ENCODE measurements at regions of chr11 and their contacts with region 1.

Region 1: GRCh38 chr11:5004424-5005274 is 10.0 kb downstream of the OR51L1 start:
- DNase-seq: peak; percentile 41
- H3K4me3 ChIP-seq: no peak overlapping the region
- H3K27ac ChIP-seq: no peak overlapping the region
- H3K4me1 ChIP-seq: no peaks in the 10 kb centered on the region
- H3K27me3 ChIP-seq: no peaks in the 10 kb centered on the region
- CTCF ChIP-seq: peak; percentile 73

Region 2: DNA sequence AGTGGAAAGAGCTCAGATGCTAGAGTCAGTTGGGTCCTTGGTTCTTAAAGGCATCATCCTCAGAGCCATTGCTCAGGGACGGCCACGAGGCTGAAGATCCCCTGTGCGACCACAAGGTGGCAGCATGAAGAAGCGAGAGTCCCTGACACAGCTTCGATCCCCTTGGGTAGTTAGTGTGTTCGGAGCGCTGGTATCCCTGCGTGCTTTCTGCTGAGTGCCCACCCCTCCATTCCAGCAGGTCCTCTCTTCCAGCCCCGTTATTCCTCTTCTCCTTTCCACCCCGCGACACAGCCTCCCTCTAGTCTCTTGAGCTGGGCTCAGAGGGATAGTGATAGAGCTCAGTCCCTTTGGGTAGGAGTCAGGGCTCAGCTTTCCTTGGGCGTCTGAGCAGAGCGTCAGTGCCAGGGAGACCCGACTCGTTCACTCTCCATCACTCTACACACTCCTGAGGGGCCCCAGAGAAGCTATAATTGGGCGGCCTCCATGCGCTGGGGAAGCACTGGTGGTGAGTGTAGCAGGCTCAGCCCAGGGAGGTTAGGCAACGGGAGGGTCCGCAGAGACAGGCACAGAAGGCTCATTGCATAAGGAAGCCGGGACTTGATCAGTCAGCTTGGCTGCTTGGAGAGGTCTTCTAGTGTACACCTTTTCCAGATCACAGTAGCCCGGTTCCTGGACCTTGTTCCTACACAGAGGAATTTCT is 367.5 kb before region 1 on chr11 and contains the start of gene OR51D1:
- intact Hi-C with region 1: loop called (anchors 5 kb)
- DNase-seq: peak; percentile 64
- H3K4me3 ChIP-seq: peak within 1 kb of the TSS; percentile 57
- H3K27ac ChIP-seq: peak within 1 kb of the TSS; percentile 14
- H3K4me1 ChIP-seq: peaks cover 14% of the 10 kb centered on the region
- H3K27me3 ChIP-seq: no peaks in the 10 kb centered on the region
- CTCF ChIP-seq: peak; percentile 95
- total RNA-seq, gene OR51D1: not detected

Measured in left ventricle myocardium inferior (tissue), 1 donor.